GM18951 (cell line): ENCODE measurements at regions of chr4 and their contacts with region 1.

Region 1: GRCh38 chr4:25862411-25863346 is at the start of gene SEL1L3:
- POLR2A ChIP-seq: peak; percentile 65

Region 2: DNA sequence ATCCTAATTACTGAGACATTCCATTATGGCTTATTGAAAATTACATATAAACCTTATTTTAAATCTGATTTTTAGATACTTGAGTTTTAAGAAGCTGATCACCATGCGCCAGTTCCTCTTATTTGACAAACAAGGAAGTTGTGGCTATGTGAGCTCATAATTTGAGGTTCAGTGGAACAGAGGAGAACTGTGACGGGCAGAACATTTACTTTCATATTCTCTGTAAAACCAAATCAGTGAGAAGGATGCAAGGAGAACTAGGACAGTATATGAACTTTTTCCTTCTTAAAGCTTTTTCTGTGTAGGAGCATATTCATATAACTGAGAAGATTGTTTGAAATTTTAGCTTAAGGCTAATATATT is 1023.2 kb after region 1 on chr4:
- in situ Hi-C with region 1: loop called (anchors 25 kb)
- POLR2A ChIP-seq: no peak